Left ventricle myocardium inferior (tissue), 1 donor: ENCODE measurements at regions of chr17 and their contacts with region 1.

Region 1: GRCh38 chr17:59331129-59331928 is at the start of gene YPEL2:
- DNase-seq: peak; percentile 99
- H3K4me3 ChIP-seq: peak within 1 kb of the TSS; percentile 99
- H3K27ac ChIP-seq: peak within 1 kb of the TSS; percentile 97
- H3K4me1 ChIP-seq: peaks cover 87% of the 10 kb centered on the region
- H3K27me3 ChIP-seq: no peaks in the 10 kb centered on the region
- CTCF ChIP-seq: no peak
- total RNA-seq, gene YPEL2: 36.3 TPM

Region 2: DNA sequence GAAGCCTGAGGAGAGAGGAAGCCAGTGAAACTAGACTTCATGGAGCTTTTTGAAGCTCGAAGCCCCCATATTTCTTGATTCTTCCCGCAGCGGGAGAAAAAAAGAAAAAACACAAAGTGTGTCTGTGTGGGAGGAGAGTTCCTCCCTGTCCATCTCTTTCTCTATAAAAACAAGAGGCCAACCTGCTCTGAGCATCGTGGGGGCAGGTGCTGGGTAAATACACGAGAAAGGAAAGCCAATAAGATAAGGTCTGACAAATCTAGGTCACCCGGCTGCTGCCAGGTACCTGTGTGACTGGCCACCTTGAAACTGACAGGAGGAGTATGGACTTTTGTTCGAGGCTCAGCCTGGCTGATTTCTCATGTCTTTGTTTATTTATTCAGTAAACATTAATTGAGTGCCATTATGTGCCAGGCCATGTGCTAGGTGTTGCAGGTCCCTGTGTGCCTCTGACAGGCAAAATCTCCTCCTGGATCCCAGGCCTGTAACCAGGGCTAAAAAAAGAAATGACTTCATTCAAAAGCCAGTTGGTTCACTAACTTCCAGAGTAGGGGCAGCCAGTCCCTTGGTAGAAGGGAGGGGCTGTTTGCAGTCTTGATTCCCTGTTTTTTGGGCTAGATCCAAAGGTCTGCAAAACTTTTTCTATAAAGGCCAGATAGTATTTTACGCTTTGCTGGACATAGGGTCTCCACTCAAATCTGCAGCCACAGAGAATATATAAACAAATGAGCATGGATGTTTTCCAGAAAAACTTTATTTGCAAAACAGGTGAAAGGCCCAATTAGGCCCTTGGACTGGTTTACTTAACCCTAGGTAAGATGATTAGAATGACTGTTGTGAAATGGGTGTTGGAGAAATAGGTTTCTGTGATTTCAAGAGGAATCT is 35.7 kb after region 1 on chr17:
- intact Hi-C with region 1: loop called (anchors 5 kb)
- DNase-seq: no peak
- H3K4me3 ChIP-seq: peak overlapping the region; percentile 35
- H3K27ac ChIP-seq: peak overlapping the region; percentile 97
- H3K4me1 ChIP-seq: peaks cover 100% of the 10 kb centered on the region
- H3K27me3 ChIP-seq: no peaks in the 10 kb centered on the region
- CTCF ChIP-seq: no peak

Region 3: GRCh38 chr17:59440784-59441441 is 109.6 kb after region 1 on chr17:
- intact Hi-C with region 1: loop called (anchors 5 kb)
- DNase-seq: peak; percentile 86
- H3K4me3 ChIP-seq: peak overlapping the region; percentile 22
- H3K27ac ChIP-seq: peak overlapping the region; percentile 77
- H3K4me1 ChIP-seq: peaks cover 51% of the 10 kb centered on the region
- H3K27me3 ChIP-seq: no peaks in the 10 kb centered on the region
- CTCF ChIP-seq: peak; percentile 88